Psoas muscle (tissue), 8 donors: ENCODE measurements at regions of chr6 and their contacts with region 1.

Region 1: DNA sequence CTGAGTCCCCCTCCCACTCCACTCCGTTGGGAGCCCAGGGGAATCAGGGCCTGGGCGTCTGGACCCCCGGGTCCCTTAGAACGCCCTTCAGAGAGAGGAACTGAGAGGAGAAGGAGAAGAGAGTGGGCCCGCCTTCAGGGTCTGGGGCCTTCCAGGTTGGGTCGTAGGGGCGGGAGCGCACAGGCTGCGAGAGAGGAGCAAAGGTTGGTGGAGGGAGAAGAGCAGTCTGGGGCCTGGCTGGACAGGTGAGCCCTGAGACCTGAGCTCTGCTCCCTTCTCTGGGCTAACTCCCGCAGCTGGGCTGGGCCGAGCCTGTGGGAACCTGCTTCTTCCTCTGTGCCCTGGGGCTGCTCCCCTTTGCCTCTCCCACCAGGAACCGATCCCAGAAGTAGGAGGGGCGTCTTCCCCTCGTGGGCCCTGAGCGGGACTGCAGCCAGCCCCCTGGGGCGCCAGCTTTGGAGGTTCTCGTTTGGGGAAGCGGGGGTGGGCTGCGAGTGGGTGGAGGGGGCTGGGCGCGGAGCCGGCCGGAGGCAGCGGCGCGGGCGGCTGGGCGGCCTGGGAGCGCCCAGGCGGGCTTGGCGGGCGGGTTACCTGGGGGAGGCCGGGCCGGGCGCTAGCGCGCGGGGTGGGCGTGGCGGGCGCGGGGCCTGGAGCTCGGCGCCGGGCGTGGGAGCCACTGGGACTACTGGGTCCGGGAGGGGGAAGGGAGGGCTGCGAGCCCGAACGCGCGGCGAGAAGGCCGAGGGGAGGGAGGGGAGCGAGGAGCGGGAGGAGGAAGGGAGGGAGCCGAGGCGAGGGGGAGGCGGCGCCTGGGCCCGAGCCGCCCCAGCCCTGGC is at the start of gene DDR1:
- DNase-seq: peak; percentile 71 to 81
- ATAC-seq: peak in 2 of 4 donors; percentile 70 to 79
- H3K4me3 ChIP-seq: peak within 1 kb of the TSS; percentile 78
- H3K27ac ChIP-seq: peak within 1 kb of the TSS; percentile 93
- H3K4me1 ChIP-seq: peaks cover 41% of the 10 kb centered on the region
- H3K27me3 ChIP-seq: no peaks in the 10 kb centered on the region
- CTCF ChIP-seq: no peak
- total RNA-seq, gene DDR1: 26.3 to 129 (median 54.2) TPM

Region 2: DNA sequence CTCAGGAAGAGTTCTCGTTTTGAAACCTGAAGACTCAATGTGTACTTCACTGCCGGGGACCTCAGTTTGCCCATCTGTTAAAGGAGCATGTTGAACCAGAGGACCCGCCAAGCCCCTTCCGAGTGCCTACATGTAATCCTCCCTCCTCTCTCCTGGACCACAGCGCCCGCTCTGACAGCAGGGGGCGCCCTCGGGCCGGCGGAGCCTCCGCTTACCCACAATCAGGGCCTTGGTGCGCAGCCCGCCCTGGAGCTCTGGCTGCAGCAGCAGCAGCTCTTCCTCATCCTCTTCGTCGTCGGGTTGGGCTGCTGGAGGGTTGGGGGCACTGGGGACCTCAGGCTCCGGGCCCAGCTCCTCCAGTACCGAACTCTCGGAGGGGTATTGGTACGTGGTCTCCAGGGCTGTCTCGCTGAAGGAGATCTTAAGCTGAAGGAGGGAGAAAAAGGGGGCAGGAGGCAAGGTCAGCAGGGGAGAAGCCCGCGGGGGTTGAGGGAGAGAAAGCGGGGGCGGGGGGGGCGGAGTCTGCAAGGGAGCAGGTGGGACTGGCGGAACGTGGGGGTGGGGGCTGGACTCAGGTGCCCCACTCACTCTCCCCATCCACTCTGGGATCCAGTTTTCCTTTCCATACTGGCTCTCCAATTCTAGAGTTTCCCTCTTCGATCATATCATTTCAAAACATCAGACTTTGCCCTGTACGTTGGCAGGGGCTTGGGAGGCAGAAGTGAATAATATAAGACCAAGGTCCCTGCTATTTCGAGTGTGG is 204.8 kb before region 1 on chr6:
- intact Hi-C with region 1: loop called in 1 of 2 experiments (anchors 5 kb)
- DNase-seq: peak; percentile 88 to 93
- ATAC-seq: peak; percentile 83 to 94 (median 90)
- H3K4me3 ChIP-seq: peak overlapping the region; percentile 85
- H3K27ac ChIP-seq: no peak overlapping the region
- H3K4me1 ChIP-seq: peaks cover 9% of the 10 kb centered on the region
- H3K27me3 ChIP-seq: no peaks in the 10 kb centered on the region
- CTCF ChIP-seq: peak; percentile 95

Region 3: GRCh38 chr6:30907758-30908591 is 24.1 kb after region 1 on chr6 and contains the start of gene GTF2H4:
- intact Hi-C with region 1: loop called in 1 of 2 experiments (anchors 1 kb)
- DNase-seq: peak; percentile 96 to 98
- ATAC-seq: peak; percentile 93 to 98 (median 97)
- H3K4me3 ChIP-seq: peak within 1 kb of the TSS; percentile 84
- H3K27ac ChIP-seq: peak within 1 kb of the TSS; percentile 74
- H3K4me1 ChIP-seq: peaks cover 9% of the 10 kb centered on the region
- H3K27me3 ChIP-seq: no peaks in the 10 kb centered on the region
- CTCF ChIP-seq: no peak
- total RNA-seq, gene GTF2H4: 13.3 to 21.3 (median 15.8) TPM

Region 4: GRCh38 chr6:30963641-30964040 is 79.7 kb after region 1 on chr6:
- intact Hi-C with region 1: no loop called
- DNase-seq: no peak
- ATAC-seq: no peak
- H3K4me3 ChIP-seq: no peak overlapping the region
- H3K27ac ChIP-seq: no peak overlapping the region
- H3K4me1 ChIP-seq: no peaks in the 10 kb centered on the region
- H3K27me3 ChIP-seq: peaks cover 0 to 13% (median 0%) of the 10 kb centered on the region in 3 donors
- CTCF ChIP-seq: no peak